ENCODE measurements at regions of chr1 and their contacts with region 1.

Region 1: DNA sequence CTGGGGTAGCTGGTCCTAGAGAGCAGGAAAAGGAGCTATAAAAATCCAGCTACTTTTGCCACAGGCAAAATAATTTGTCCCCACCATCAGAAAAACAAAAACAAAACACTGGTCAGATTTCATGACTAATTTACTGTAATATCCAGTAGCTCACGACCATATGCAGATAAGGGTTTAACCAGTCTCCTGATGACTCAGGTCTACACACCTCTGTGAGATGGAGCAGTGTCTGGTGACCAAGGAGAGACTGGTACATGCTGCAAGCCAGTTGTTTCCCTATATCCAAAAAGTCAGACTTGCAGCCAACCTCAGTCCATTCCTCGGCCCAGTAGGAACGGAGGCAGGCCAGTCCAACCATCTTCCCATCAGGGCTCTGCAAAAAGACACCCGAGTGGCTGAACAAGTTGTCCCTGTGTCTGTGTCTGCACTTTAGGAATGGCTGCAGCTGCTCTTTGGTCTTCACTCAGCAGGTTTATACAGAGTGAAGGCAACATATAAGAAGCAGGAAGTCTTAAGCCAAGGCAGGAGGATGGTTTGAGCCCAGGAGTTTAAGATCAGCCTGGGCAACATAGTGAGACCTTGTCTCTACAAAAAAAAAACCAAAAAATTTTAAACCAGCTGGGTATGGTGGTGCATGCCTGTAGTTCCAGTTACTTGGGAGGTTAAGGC is 29.4 kb downstream of the DNASE2B start:
- DNase-seq: no peak
- H3K4me3 ChIP-seq: no peak overlapping the region
- H3K27ac ChIP-seq: no peak overlapping the region
- H3K4me1 ChIP-seq: no peaks in the 10 kb centered on the region
- H3K27me3 ChIP-seq: no peaks in the 10 kb centered on the region
- CTCF ChIP-seq: no peak
- EP300 ChIP-seq: no peak
- POLR2A ChIP-seq: no peak

Region 2: GRCh38 chr1:84156210-84156621 is 271.4 kb before region 1 on chr1:
- intact Hi-C with region 1: loop called in 1 of 4 experiments (anchors 10 kb)
- DNase-seq: no peak
- H3K4me3 ChIP-seq: no peak overlapping the region
- H3K27ac ChIP-seq: no peak overlapping the region
- H3K4me1 ChIP-seq: peaks cover 2% of the 10 kb centered on the region
- H3K27me3 ChIP-seq: no peaks in the 10 kb centered on the region
- CTCF ChIP-seq: no peak
- EP300 ChIP-seq: no peak
- POLR2A ChIP-seq: no peak

Measured in ovary (tissue), 10 donors.